Naive thymus-derived CD4-positive, alpha-beta T cell (primary cell): ENCODE measurements at regions of chr1 and their contacts with region 1.

Region 1: GRCh38 chr1:116377541-116378529 is 4.8 kb downstream of the ATP1A1 start:
- DNase-seq: peak in 8 of 9 donors; percentile 40 to 64 (median 56)
- ATAC-seq: peak; percentile 62
- H3K4me3 ChIP-seq: peak overlapping the region; percentile 94
- H3K4me3 Mint-ChIP-seq: peak overlapping the region; percentile 86 to 99 (median 96)
- H3K27ac ChIP-seq: peak overlapping the region; percentile 98
- H3K27ac Mint-ChIP-seq: peak overlapping the region; percentile 82 to 98 (median 94)
- H3K4me1 ChIP-seq: peaks cover 38 to 59% of the 10 kb centered on the region in 2 donors
- H3K4me1 Mint-ChIP-seq: peaks cover 46 to 86% (median 79%) of the 10 kb centered on the region in 7 donors
- H3K27me3 ChIP-seq: no peaks in the 10 kb centered on the region
- H3K27me3 Mint-ChIP-seq: no peaks in the 10 kb centered on the region

Region 2: GRCh38 chr1:115565789-115566188 is 812.0 kb before region 1 on chr1:
- CTCF ChIA-PET with region 1: no interaction called
- POLR2A ChIA-PET with region 1: no interaction called
- intact Hi-C with region 1: no loop called
- DNase-seq: no peak
- ATAC-seq: no peak
- H3K4me3 ChIP-seq: no peak overlapping the region
- H3K4me3 Mint-ChIP-seq: no peak overlapping the region
- H3K27ac ChIP-seq: no peak overlapping the region
- H3K27ac Mint-ChIP-seq: no peak overlapping the region
- H3K4me1 ChIP-seq: no peaks in the 10 kb centered on the region
- H3K4me1 Mint-ChIP-seq: no peaks in the 10 kb centered on the region
- H3K27me3 ChIP-seq: no peaks in the 10 kb centered on the region
- H3K27me3 Mint-ChIP-seq: peaks cover 22 to 46% (median 26%) of the 10 kb centered on the region in 5 donors

Region 3: GRCh38 chr1:116151739-116152576 is 225.9 kb before region 1 on chr1:
- CTCF ChIA-PET with region 1: interaction called, 4 read pairs
- POLR2A ChIA-PET with region 1: interaction called, 7 read pairs
- intact Hi-C with region 1: loop called (anchors 1 to 2 kb)
- DNase-seq: peak; percentile 61 to 89 (median 76)
- ATAC-seq: peak; percentile 97
- H3K4me3 ChIP-seq: peak overlapping the region; percentile 48
- H3K4me3 Mint-ChIP-seq: peak overlapping the region; percentile 70 to 87 (median 82)
- H3K27ac ChIP-seq: peak overlapping the region; percentile 74
- H3K27ac Mint-ChIP-seq: peak overlapping the region; percentile 63 to 98 (median 92)
- H3K4me1 ChIP-seq: peaks cover 7 to 21% of the 10 kb centered on the region in 2 donors
- H3K4me1 Mint-ChIP-seq: peaks cover 9 to 32% (median 25%) of the 10 kb centered on the region in 7 donors
- H3K27me3 ChIP-seq: no peaks in the 10 kb centered on the region
- H3K27me3 Mint-ChIP-seq: peaks cover 0 to 31% (median 0%) of the 10 kb centered on the region in 5 donors

Region 4: DNA sequence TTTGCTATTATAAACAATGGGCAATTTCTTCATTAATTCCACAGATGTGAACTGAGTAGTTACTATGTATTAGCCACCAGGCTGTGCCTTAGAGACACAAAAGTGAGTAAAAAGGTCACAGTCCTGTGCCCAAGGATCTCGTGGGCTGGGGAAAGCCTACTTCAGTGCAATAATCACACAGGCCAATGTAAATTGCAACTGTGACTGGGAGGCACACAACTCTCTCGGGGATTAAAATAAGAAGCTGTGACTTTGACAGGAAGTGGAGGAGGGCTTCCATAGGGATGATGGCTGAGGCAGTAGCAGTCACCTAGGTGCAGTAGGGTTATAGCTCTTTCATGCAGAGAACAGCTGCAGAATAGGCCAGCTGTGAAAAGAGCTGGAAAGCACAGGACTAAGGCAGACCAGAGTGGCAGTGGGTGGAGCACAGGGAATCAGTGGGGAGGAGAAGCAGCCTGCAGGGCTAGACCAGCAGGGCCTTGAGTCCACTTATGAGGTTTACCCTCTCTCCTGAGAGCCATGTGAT is 144.8 kb before region 1 on chr1:
- CTCF ChIA-PET with region 1: interaction called, 17 read pairs
- POLR2A ChIA-PET with region 1: interaction called, 7 read pairs
- intact Hi-C with region 1: loop called (anchors 1 to 5 kb)
- DNase-seq: peak in 7 of 9 donors; percentile 29 to 66 (median 52)
- ATAC-seq: peak; percentile 82
- H3K4me3 ChIP-seq: no peak overlapping the region
- H3K4me3 Mint-ChIP-seq: peak overlapping the region in 6 of 10 donors; percentile 1 to 73 (median 26)
- H3K27ac ChIP-seq: no peak overlapping the region
- H3K27ac Mint-ChIP-seq: peak overlapping the region in 7 of 9 donors; percentile 5 to 90 (median 69)
- H3K4me1 ChIP-seq: peaks cover 4 to 10% of the 10 kb centered on the region in 2 donors
- H3K4me1 Mint-ChIP-seq: peaks cover 6 to 29% (median 25%) of the 10 kb centered on the region in 7 donors
- H3K27me3 ChIP-seq: no peaks in the 10 kb centered on the region
- H3K27me3 Mint-ChIP-seq: peaks cover 0 to 19% (median 0%) of the 10 kb centered on the region in 5 donors

Region 5: DNA sequence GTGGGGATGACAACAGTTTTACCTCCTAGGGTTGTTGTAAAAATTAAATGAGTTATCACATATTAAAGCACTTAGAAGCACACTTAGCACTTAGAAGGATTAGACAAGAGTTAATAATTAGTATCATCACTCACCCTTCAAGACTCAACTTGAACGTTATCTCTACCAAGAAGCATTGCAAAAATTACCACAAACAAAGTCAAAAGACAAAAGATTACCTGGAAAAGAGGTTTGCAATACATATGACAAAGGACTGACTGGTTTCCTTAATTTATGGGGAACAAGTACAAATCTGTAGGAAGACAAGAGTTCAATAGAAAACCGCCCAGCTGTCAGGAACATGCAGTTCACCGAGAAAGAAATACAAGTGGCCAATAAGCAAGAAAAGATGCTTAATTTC is 98.1 kb before region 1 on chr1:
- CTCF ChIA-PET with region 1: no interaction called
- POLR2A ChIA-PET with region 1: no interaction called
- intact Hi-C with region 1: no loop called
- DNase-seq: no peak
- ATAC-seq: no peak
- H3K4me3 ChIP-seq: no peak overlapping the region
- H3K4me3 Mint-ChIP-seq: no peak overlapping the region
- H3K27ac ChIP-seq: no peak overlapping the region
- H3K27ac Mint-ChIP-seq: no peak overlapping the region
- H3K4me1 ChIP-seq: no peaks in the 10 kb centered on the region
- H3K4me1 Mint-ChIP-seq: peaks cover 0 to 13% (median 7%) of the 10 kb centered on the region in 7 donors
- H3K27me3 ChIP-seq: no peaks in the 10 kb centered on the region
- H3K27me3 Mint-ChIP-seq: peaks cover 0 to 39% (median 0%) of the 10 kb centered on the region in 5 donors

Region 6: GRCh38 chr1:116345843-116346242 is 32.0 kb before region 1 on chr1:
- CTCF ChIA-PET with region 1: no interaction called
- POLR2A ChIA-PET with region 1: interaction called, 52 read pairs
- intact Hi-C with region 1: loop called in 1 of 2 experiments (anchors 1 kb)
- DNase-seq: peak in 8 of 9 donors; percentile 17 to 89 (median 86)
- ATAC-seq: peak; percentile 93
- H3K4me3 ChIP-seq: no peak overlapping the region
- H3K4me3 Mint-ChIP-seq: peak overlapping the region in 9 of 10 donors; percentile 18 to 77 (median 70)
- H3K27ac ChIP-seq: peak overlapping the region; percentile 72
- H3K27ac Mint-ChIP-seq: peak overlapping the region in 8 of 9 donors; percentile 89 to 98 (median 92)
- H3K4me1 ChIP-seq: peaks cover 9 to 83% of the 10 kb centered on the region in 2 donors
- H3K4me1 Mint-ChIP-seq: peaks cover 10 to 93% (median 89%) of the 10 kb centered on the region in 7 donors
- H3K27me3 ChIP-seq: no peaks in the 10 kb centered on the region
- H3K27me3 Mint-ChIP-seq: peaks cover 0 to 3% (median 0%) of the 10 kb centered on the region in 5 donors

Region 7: GRCh38 chr1:116389013-116389412 is 11.2 kb after region 1 on chr1:
- CTCF ChIA-PET with region 1: interaction called, 3 read pairs
- POLR2A ChIA-PET with region 1: interaction called, 25 read pairs
- intact Hi-C with region 1: loop called (anchors 1 kb)
- DNase-seq: no peak
- ATAC-seq: no peak
- H3K4me3 ChIP-seq: no peak overlapping the region
- H3K4me3 Mint-ChIP-seq: peak overlapping the region in 5 of 10 donors; percentile 14 to 53 (median 21)
- H3K27ac ChIP-seq: peak overlapping the region; percentile 39
- H3K27ac Mint-ChIP-seq: peak overlapping the region; percentile 68 to 92 (median 79)
- H3K4me1 ChIP-seq: peaks cover 22 to 40% of the 10 kb centered on the region in 2 donors
- H3K4me1 Mint-ChIP-seq: peaks cover 26 to 87% (median 73%) of the 10 kb centered on the region in 7 donors
- H3K27me3 ChIP-seq: no peaks in the 10 kb centered on the region
- H3K27me3 Mint-ChIP-seq: no peaks in the 10 kb centered on the region

Region 8: GRCh38 chr1:116418091-116418830 is 40.4 kb after region 1 on chr1:
- CTCF ChIA-PET with region 1: interaction called, 6 read pairs
- POLR2A ChIA-PET with region 1: interaction called, 36 read pairs
- intact Hi-C with region 1: loop called (anchors 1 kb)
- DNase-seq: peak; percentile 76 to 90 (median 88)
- ATAC-seq: peak; percentile 97
- H3K4me3 ChIP-seq: peak overlapping the region; percentile 97
- H3K4me3 Mint-ChIP-seq: peak overlapping the region; percentile 85 to 95 (median 90)
- H3K27ac ChIP-seq: peak overlapping the region; percentile 87
- H3K27ac Mint-ChIP-seq: peak overlapping the region; percentile 83 to 98 (median 95)
- H3K4me1 ChIP-seq: peaks cover 12 to 18% of the 10 kb centered on the region in 2 donors
- H3K4me1 Mint-ChIP-seq: peaks cover 22 to 52% (median 47%) of the 10 kb centered on the region in 7 donors
- H3K27me3 ChIP-seq: no peaks in the 10 kb centered on the region
- H3K27me3 Mint-ChIP-seq: peaks cover 0 to 15% (median 0%) of the 10 kb centered on the region in 5 donors

Region 9: GRCh38 chr1:116472431-116472961 is 94.7 kb after region 1 on chr1:
- CTCF ChIA-PET with region 1: no interaction called
- POLR2A ChIA-PET with region 1: no interaction called
- intact Hi-C with region 1: no loop called
- DNase-seq: no peak
- ATAC-seq: no peak
- H3K4me3 ChIP-seq: no peak overlapping the region
- H3K4me3 Mint-ChIP-seq: no peak overlapping the region
- H3K27ac ChIP-seq: no peak overlapping the region
- H3K27ac Mint-ChIP-seq: peak overlapping the region in 1 of 9 donors; percentile 5
- H3K4me1 ChIP-seq: no peaks in the 10 kb centered on the region
- H3K4me1 Mint-ChIP-seq: peaks cover 0 to 2% (median 0%) of the 10 kb centered on the region in 7 donors
- H3K27me3 ChIP-seq: no peaks in the 10 kb centered on the region
- H3K27me3 Mint-ChIP-seq: peaks cover 0 to 9% (median 7%) of the 10 kb centered on the region in 5 donors

Region 10: DNA sequence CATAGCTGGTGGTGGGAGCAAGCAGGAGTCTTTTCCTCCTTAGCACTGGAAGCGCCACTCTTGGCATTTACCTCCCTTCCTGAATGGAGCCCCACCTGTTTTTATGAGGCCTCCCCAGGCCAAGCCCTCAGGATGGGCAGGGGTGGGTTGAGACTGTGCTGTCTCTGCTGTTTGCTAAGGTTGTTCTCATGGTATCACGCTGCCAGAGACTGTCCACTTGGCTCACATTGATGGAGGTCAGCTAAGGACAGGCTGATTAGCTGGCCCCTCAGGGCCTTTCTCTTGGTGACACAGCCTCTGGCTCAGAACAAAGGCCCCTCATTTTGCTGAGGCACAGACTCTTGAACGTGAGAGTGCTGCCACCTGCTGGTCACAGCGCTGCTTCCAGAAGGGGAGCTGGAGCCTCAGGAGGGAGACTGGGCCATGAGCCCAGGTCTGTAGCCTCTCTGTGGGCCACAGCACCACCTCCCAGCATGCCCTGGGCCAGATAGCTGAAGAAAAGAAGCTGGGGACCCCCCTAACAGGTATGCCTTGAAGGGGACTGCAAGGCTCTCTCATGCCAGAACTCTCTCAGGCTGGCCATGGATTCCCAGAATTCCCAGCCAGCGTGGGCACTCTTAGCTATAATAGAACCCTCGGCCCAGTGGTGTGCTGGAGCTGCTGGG is 107.4 kb after region 1 on chr1:
- CTCF ChIA-PET with region 1: interaction called, 8 read pairs
- POLR2A ChIA-PET with region 1: interaction called, 5 read pairs
- intact Hi-C with region 1: loop called in 1 of 2 experiments (anchors 1 kb)
- DNase-seq: peak; percentile 59 to 84 (median 76)
- ATAC-seq: peak; percentile 93
- H3K4me3 ChIP-seq: no peak overlapping the region
- H3K4me3 Mint-ChIP-seq: no peak overlapping the region
- H3K27ac ChIP-seq: no peak overlapping the region
- H3K27ac Mint-ChIP-seq: peak overlapping the region in 1 of 9 donors; percentile 21
- H3K4me1 ChIP-seq: no peaks in the 10 kb centered on the region
- H3K4me1 Mint-ChIP-seq: peaks cover 0 to 15% (median 0%) of the 10 kb centered on the region in 7 donors
- H3K27me3 ChIP-seq: no peaks in the 10 kb centered on the region
- H3K27me3 Mint-ChIP-seq: peaks cover 0 to 8% (median 0%) of the 10 kb centered on the region in 5 donors